Posterior vena cava (tissue), 2 donors: ENCODE measurements at regions of chr13 and their contacts with region 1.

Region 1: DNA sequence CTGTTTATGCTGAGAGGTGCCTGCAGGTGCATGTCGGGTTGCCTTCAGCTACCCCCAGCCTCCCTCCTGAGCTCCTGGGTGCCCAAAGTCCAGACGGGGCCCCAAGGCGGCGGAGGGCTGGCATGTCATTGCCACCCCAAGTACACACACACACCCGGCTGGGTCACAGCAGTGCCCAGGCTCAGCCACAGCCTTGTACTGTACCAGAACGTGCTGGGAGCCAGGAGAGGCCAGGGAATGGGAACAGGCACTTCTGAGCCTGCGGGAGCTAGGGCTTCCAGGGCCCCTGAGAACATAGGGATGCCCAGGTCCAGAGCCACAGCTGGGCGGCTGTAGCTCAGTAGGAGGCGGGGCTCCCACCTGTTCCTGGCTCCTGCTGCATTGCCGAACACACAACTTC is 51.0 kb upstream of the MAB21L1 start:
- DNase-seq: no peak

Region 2: GRCh38 chr13:34335014-34336007 is 1192.1 kb before region 1 on chr13:
- intact Hi-C with region 1: loop called in 1 of 2 experiments (anchors 5 kb)
- DNase-seq: no peak

Region 3: DNA sequence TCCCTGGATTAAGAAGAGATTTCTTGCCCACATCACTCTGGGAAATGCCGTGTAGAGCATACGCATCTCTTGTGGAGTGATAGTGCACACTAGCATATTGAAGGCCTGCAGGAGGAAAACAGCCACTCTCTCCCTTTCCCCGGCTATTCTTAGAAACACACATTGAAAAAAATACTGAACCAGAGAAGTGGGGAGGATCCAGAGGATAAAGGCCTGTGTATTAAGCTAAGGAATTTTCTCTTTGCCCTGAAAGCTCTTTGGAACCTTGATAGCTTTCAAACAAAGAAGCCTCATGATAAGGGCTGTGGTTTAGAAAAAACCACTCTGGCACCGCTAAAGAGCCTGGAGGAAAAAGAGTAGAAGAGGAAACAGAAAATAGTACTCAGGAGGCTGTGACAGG is 971.5 kb before region 1 on chr13:
- intact Hi-C with region 1: no loop called
- DNase-seq: no peak